ENCODE measurements at regions of chr2 and their contacts with region 1.

Region 1: DNA sequence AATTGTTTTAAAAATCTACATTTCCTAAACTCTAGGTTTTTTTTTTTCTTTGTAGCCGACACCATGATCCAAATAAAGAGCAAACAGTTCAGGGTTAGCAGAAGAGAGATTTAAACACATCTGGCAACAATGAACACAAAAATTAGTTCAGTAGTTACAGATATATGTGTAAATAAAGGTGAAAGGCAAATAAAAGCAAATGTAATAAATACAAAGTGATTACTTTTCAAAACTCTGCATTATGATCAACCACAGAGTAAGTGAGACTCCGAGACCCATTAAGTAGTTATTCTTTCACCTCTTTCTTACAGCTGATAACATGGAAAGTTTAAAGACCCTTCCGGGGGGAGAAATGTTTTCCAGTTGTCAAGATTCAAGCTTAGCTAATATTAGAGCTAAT is 716 bp downstream of the CALCRL start:
- DNase-seq: no peak
- H3K4me3 ChIP-seq: peak overlapping the region; percentile 53
- H3K27ac ChIP-seq: no peak overlapping the region
- H3K27me3 ChIP-seq: no peaks in the 10 kb centered on the region
- CTCF ChIP-seq: no peak

Region 2: GRCh38 chr2:186862869-186863709 is 584.2 kb before region 1 on chr2:
- CTCF ChIA-PET with region 1: interaction called, 72 read pairs
- POLR2A ChIA-PET with region 1: no interaction called
- DNase-seq: no peak
- H3K4me3 ChIP-seq: no peak overlapping the region
- H3K27ac ChIP-seq: no peak overlapping the region
- H3K27me3 ChIP-seq: no peaks in the 10 kb centered on the region
- CTCF ChIP-seq: peak; percentile 73

Region 3: DNA sequence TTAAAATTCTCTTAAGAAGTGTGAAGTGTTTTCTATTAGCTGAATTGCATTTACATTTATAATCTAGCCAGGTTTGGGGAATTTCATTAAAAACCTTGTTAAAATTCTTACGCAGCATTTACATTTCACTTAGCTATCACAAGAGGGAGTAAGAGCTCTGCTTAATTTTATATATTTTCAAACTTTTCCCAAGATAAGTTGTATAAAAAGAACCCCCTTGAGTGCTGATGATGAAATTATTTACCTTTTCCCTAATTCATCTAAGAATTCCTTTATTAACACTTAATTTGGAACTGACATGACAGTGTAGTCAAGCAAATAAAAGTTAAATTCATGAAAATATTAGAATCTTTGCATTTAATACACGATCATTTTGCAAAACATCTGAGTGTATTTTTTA is 544.1 kb before region 1 on chr2:
- CTCF ChIA-PET with region 1: interaction called, 21 read pairs
- POLR2A ChIA-PET with region 1: no interaction called
- DNase-seq: no peak
- H3K4me3 ChIP-seq: no peak overlapping the region
- H3K27ac ChIP-seq: no peak overlapping the region
- H3K27me3 ChIP-seq: no peaks in the 10 kb centered on the region
- CTCF ChIP-seq: peak; percentile 64

Measured in AG04450 (cell line).